Adrenal gland (tissue), 19 donors: ENCODE measurements at regions of chrX and their contacts with region 1.

Region 1: DNA sequence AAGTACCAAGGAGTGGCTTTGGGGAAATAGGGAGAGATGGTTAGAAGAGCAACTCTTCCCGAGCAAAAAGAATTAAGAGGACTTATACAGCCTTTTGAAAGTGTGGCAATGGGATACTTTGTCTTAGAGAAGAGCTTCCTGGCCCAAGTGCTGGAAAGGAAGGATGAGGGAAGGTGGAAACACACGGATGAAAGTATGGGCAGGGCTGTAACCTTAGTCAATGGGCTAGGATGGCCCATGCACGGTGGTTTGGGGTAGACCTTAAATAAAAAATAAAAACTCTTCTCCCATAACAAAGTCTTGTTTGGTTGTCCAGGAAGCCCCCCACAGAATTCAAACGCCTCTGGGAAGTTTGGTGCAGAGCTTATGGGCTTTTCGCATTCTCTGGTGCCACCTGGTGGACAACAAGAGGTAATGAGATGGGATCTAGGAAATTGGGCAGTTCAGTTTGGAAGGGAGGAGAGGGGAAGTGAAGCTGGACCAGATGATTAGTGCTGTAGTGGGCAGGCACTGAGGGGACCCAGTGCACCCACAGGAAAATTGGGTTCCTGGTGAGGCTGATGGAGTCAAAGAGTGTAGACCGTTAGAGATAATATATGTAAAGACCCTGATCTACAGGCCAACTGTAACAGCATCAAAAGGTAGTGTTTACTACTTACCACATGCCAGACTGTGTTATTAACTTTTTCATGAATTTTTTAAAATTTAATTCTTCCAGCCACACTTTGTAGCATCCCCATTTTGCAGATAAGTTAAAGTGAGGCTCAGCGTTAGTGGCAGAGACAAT is 13.8 kb upstream of the ENOX2 start:
- DNase-seq: peak; percentile 19 to 59 (median 44)
- H3K4me3 ChIP-seq: no peak overlapping the region
- H3K27ac ChIP-seq: no peak overlapping the region
- H3K4me1 ChIP-seq: no peaks in the 10 kb centered on the region
- H3K27me3 ChIP-seq: peaks cover 8% of the 10 kb centered on the region
- CTCF ChIP-seq: peak; percentile 61 to 82 (median 74)
- POLR2A ChIP-seq: no peak

Region 2: GRCh38 chrX:130393451-130394074 is 523.3 kb before region 1 on chrX:
- intact Hi-C with region 1: loop called in 1 of 2 experiments (anchors 10 kb)
- DNase-seq: peak; percentile 29 to 62 (median 49)
- H3K4me3 ChIP-seq: no peak overlapping the region
- H3K27ac ChIP-seq: no peak overlapping the region
- H3K4me1 ChIP-seq: no peaks in the 10 kb centered on the region
- H3K27me3 ChIP-seq: peaks cover 27% of the 10 kb centered on the region
- CTCF ChIP-seq: peak; percentile 41 to 72 (median 51)
- POLR2A ChIP-seq: no peak

Region 3: DNA sequence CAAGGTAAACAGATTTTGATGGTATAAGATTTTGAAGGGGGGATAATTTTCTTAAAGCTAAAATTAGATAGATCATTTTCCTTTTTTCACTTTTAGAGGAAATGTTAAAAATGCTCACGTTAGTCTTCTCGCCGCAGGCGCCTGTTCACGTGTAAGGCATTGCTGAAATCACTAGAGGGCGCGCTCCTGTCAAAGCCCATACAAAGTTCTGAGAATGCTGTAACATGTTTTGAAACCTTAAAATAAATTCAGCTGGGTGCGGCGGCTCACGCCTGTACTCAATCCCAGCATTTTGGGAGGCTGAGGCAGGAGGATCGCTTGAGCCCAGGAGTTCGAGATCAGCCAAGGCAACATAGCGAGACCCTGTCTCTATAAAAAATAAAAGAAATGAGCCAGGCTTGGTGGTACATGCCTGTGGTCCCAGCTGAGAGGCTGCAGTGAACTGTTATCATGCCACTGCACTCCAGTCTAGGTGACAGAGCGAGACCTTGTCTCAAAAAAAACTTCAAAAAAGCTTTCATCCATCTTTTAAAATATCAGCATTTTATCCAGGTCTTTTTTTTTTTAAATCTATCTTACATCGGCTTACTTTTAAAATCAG is 377.0 kb before region 1 on chrX:
- intact Hi-C with region 1: loop called (anchors 5 to 10 kb)
- DNase-seq: peak; percentile 35 to 73 (median 58)
- H3K4me3 ChIP-seq: no peak overlapping the region
- H3K27ac ChIP-seq: no peak overlapping the region
- H3K4me1 ChIP-seq: no peaks in the 10 kb centered on the region
- H3K27me3 ChIP-seq: peaks cover 16% of the 10 kb centered on the region
- CTCF ChIP-seq: peak; percentile 29 to 78 (median 40)
- POLR2A ChIP-seq: no peak

Region 4: GRCh38 chrX:130758072-130758471 is 158.8 kb before region 1 on chrX:
- intact Hi-C with region 1: no loop called
- DNase-seq: no peak
- H3K4me3 ChIP-seq: no peak overlapping the region
- H3K27ac ChIP-seq: no peak overlapping the region
- H3K4me1 ChIP-seq: no peaks in the 10 kb centered on the region
- H3K27me3 ChIP-seq: peaks cover 6% of the 10 kb centered on the region
- CTCF ChIP-seq: no peak
- POLR2A ChIP-seq: no peak

Region 5: DNA sequence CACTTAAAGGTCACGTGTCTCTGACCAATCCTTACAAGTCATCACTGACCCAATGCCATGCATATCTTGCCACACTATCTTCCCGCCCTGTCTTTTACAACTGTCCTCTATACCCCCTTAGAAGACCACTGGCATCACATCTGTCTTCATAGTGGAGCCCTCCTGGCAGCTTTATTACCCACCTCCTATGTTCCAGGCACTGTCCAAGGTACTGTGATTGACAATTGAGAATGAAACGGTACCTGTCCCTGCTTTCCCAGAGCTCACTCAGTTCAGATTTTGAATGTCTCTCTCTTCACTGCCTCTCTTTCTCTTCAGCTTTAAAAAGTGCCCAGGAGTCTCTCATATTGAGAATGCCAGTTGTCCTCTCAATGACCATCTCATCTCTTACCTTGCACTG is 229.9 kb after region 1 on chrX:
- intact Hi-C with region 1: no loop called
- DNase-seq: no peak
- H3K4me3 ChIP-seq: no peak overlapping the region
- H3K27ac ChIP-seq: no peak overlapping the region
- H3K4me1 ChIP-seq: no peaks in the 10 kb centered on the region
- H3K27me3 ChIP-seq: no peaks in the 10 kb centered on the region
- CTCF ChIP-seq: no peak
- POLR2A ChIP-seq: no peak